AG04449 (cell line): ENCODE measurements at regions of chr4 and their contacts with region 1.

Region 1: DNA sequence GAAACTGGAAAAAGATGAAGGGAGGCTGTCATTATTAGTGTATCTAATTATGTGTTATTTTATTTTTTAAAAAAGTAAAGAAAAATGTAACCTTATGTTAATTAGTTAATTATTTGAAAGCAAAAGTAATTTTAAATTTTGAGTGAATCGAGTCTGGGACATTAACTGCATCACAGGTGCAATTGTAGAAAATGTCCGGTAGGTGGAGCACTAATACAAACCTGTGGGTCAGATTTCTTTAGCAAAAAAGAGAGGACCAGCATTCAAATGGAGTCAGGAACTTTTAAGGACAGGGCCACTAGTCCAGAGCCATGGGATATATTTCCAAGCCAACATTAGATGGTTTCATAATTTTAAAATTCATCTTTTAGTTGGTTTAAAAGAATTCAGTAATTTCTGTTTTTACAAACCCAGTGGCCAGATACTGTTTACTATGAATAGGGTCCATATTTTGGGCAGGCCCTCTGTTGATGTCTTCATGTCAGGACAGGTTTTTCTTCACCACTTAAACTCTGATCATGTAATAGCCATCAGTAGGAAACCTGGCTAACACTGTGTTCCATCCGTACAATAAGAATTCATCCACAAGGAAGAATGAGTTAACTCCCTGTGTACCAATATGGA is 27.2 kb downstream of the BST1 start:
- DNase-seq: no peak
- H3K4me3 ChIP-seq: no peak overlapping the region
- CTCF ChIP-seq: peak; percentile 59

Region 2: GRCh38 chr4:15188605-15189539 is 541.1 kb before region 1 on chr4:
- CTCF ChIA-PET with region 1: no interaction called
- POLR2A ChIA-PET with region 1: no interaction called
- DNase-seq: no peak
- H3K4me3 ChIP-seq: no peak overlapping the region
- CTCF ChIP-seq: no peak

Region 3: DNA sequence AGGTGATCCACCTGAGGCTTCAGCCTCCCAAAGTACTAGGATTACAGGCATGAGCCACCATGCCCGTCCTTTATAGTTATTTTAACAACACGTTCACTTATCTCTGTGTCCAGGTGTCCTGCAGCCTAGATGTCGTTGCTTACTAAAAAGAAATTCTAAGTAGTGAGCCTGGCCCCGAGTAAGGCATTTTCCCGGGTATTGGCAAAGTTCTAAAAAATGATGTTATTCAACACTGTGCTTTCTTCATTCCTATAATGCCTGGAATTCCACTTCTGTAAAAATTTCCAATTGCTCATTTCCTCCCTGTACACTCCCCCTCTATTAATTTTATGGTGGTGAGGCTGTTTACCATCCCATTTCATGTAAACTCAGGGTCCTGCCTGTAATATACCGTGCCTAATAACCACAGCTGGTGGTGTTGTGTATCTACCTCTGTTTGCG is 13.0 kb before region 1 on chr4:
- CTCF ChIA-PET with region 1: interaction called, 29 read pairs
- POLR2A ChIA-PET with region 1: no interaction called
- DNase-seq: no peak
- H3K4me3 ChIP-seq: no peak overlapping the region
- CTCF ChIP-seq: no peak

Region 4: GRCh38 chr4:15744016-15744545 is 14.1 kb after region 1 on chr4:
- CTCF ChIA-PET with region 1: interaction called, 14 read pairs
- POLR2A ChIA-PET with region 1: no interaction called
- DNase-seq: peak; percentile 41
- H3K4me3 ChIP-seq: no peak overlapping the region
- CTCF ChIP-seq: no peak